ENCODE measurements at regions of chrX and their contacts with region 1.

Region 1: DNA sequence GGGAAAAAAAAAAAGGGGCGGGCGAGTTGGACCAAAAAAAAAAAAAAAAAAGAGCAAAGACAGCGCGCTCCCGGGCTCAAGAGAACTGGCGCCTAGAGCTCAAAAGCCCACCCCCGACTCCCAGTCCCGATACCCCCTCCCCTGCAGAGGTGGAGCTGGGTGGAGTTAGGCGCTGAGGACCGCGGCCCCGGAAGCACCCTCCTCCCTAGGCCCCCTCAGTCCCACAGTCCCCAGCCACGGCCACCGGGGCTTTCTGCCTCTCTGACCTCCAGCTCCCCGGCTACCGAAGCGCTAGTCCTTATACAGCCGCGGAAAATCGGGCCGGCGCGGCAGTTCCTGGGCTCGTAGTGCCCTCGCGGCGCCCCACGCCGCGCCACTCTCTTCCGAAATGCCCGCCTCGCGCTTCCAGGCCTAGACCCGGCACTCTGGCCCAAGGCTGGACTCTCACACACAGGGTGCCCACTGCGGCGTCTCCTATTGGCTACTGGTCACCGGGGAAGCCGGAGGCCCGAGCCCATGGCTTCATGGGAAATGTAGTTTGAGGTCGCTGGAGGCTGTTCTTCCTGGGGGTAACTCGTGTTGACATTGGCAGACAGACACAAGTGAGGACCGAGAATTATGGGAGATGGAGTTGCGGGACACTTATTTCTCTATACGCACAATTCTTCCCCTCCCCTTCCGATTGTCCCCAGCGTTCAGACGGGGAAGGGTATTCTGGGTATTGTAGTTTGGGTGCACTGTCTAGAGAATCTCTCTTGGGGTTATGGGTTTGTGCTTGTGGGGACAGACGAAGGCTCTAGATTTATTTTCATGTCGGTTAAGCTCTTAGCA is at the start of gene ENOX2:
- DNase-seq: peak; percentile 96
- ATAC-seq: peak; percentile 99
- H3K4me3 ChIP-seq: peak within 1 kb of the TSS; percentile 68
- H3K27ac ChIP-seq: peak within 1 kb of the TSS; percentile 85
- H3K4me1 ChIP-seq: no peaks in the 10 kb centered on the region
- H3K27me3 ChIP-seq: peaks cover 2% of the 10 kb centered on the region; the same call in 1 of the 2 replicates
- CTCF ChIP-seq: no peak
- POLR2A ChIP-seq: peak; percentile 85
- RAD21 ChIP-seq: no peak
- total RNA-seq, gene ENOX2: 11.1 and 11.8 TPM in 2 replicates

Region 2: DNA sequence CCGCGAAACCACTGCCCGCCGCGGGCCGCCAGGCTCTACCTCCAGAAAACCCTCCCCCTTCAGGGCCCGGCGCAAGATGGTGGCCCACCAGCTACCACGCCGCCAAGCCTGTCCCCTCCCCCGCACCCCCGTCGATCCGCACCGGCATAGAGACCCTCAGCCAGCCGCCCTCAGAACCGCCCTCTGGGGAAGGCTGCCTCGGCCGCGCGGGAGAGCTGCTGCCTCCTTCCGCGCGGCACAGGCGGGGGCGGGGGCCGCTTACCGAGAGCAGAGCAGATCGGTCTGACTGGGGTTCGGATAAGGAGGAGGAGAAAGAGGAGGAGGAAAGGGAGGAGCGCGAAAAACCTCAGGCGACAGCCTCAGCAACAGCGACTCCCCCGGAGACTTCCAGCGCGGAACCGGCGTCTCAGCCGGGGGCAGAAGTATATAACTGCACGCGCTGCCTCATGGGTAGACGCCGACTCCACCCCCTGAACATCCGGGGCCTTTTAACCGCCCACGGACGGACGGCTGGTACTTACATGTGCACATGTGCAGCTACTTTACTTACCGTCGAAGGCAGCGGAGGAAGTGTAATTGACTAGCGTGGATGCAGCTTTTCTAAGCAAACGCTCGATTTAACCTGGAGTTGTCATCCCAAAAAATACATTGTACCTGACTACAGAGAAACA is 634.4 kb before region 1 on chrX and contains the start of gene ZNF280C:
- CTCF ChIA-PET with region 1: no interaction called
- POLR2A ChIA-PET with region 1: no interaction called
- dilution Hi-C with region 1: no loop called
- in situ Hi-C with region 1: loop called (anchors 25 kb)
- intact Hi-C with region 1: no loop called
- DNase-seq: peak; percentile 91
- ATAC-seq: peak; percentile 97
- H3K4me3 ChIP-seq: peak within 1 kb of the TSS; percentile 91
- H3K27ac ChIP-seq: peak within 1 kb of the TSS; percentile 80
- H3K4me1 ChIP-seq: no peaks in the 10 kb centered on the region
- H3K27me3 ChIP-seq: no peaks in the 10 kb centered on the region; the same call in 1 of the 2 replicates
- CTCF ChIP-seq: peak; percentile 42
- POLR2A ChIP-seq: peak; percentile 97
- RAD21 ChIP-seq: no peak; the same call in 1 of the 2 replicates
- total RNA-seq, gene ZNF280C: 4.5 and 6.1 TPM in 2 replicates

Region 3: GRCh38 chrX:130575831-130576389 is 327.1 kb before region 1 on chrX:
- CTCF ChIA-PET with region 1: interaction called, 5 read pairs
- POLR2A ChIA-PET with region 1: no interaction called
- dilution Hi-C with region 1: no loop called
- in situ Hi-C with region 1: no loop called
- intact Hi-C with region 1: loop called (anchors 5 kb)
- DNase-seq: peak; percentile 33
- ATAC-seq: peak; percentile 81
- H3K4me3 ChIP-seq: no peak overlapping the region
- H3K27ac ChIP-seq: no peak overlapping the region
- H3K4me1 ChIP-seq: no peaks in the 10 kb centered on the region
- H3K27me3 ChIP-seq: peaks cover 2% of the 10 kb centered on the region; the same call in 1 of the 2 replicates
- CTCF ChIP-seq: peak; percentile 74
- POLR2A ChIP-seq: no peak
- RAD21 ChIP-seq: peak; percentile 84

Region 4: DNA sequence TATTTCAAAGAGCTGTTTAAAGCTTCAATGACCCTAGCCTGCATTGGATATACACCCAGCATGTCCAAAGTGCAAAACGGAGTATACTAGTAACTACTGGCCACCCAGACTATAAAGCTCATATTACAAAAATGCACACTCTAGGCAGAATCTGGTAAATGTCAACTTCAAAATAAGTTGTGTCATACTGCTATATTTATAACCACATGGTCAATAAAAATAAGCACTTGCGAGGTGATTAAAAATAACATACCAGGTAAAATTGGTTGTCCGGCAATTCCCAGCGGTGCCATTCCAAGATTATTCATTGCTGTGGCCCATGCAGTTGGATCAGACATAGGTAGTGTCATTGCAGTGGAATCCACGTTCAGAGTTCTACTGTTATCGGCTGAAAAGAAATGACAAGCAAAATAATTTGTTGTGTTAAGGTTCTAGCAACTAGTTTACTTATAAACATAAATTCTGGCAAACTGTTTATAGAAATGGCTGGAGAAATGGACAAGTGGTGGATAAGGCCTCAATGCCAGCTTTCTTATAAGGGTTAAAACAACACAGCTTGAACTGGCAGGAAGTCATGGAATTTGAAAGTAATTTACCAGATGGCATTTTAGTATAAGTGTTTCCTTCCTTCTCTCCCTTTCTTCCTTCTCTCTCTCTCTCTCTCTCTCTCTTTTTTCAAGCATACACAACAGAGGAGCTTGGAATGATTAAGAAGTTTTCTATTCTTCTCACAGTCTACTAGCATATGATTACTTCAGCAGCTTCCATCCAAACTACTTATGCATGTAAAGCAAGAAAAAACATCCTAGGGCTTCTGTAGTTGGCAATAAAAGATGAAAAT is 199.9 kb before region 1 on chrX:
- CTCF ChIA-PET with region 1: no interaction called
- POLR2A ChIA-PET with region 1: interaction called, 25 read pairs
- dilution Hi-C with region 1: no loop called
- in situ Hi-C with region 1: no loop called
- intact Hi-C with region 1: no loop called
- DNase-seq: no peak
- ATAC-seq: no peak
- H3K4me3 ChIP-seq: no peak overlapping the region
- H3K27ac ChIP-seq: no peak overlapping the region
- H3K4me1 ChIP-seq: peaks cover 3% of the 10 kb centered on the region; the same call in 1 of the 2 replicates
- H3K27me3 ChIP-seq: no peaks in the 10 kb centered on the region
- CTCF ChIP-seq: no peak
- POLR2A ChIP-seq: no peak
- RAD21 ChIP-seq: no peak

Region 5: GRCh38 chrX:130994671-130995070 is 91.7 kb after region 1 on chrX:
- CTCF ChIA-PET with region 1: no interaction called
- POLR2A ChIA-PET with region 1: no interaction called
- dilution Hi-C with region 1: no loop called
- in situ Hi-C with region 1: no loop called
- intact Hi-C with region 1: no loop called
- DNase-seq: peak; percentile 2
- ATAC-seq: no peak
- H3K4me3 ChIP-seq: no peak overlapping the region
- H3K27ac ChIP-seq: no peak overlapping the region
- H3K4me1 ChIP-seq: no peaks in the 10 kb centered on the region
- H3K27me3 ChIP-seq: peaks cover 5% of the 10 kb centered on the region; the same call in 1 of the 2 replicates
- CTCF ChIP-seq: peak; percentile 42
- POLR2A ChIP-seq: no peak
- RAD21 ChIP-seq: 0 out of 2 replicates have a peak, but pooled peaks have one; percentile 10

Region 6: DNA sequence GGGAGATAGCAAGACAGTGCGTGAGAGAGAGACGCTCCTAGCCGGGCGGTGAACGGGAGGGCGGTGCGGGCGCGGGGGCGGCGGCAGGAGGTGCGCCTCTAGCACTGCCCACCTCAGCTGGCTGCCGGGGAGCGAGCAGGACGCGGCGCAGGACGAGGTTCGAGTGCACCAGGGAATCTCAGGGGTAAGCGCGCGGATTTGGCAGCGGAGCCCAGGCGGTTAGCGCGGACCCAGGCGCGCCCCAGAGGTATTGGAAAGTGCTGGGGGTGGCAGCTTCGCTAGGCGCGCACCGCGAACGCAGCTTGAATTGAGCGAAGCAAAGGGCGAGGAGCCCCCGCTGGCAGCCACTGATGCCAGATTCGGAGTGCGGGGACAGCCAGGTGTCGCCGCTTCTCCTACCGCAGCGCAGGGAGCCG is 179.3 kb after region 1 on chrX:
- CTCF ChIA-PET with region 1: no interaction called
- POLR2A ChIA-PET with region 1: no interaction called
- dilution Hi-C with region 1: no loop called
- in situ Hi-C with region 1: no loop called
- intact Hi-C with region 1: no loop called
- DNase-seq: no peak
- ATAC-seq: no peak
- H3K4me3 ChIP-seq: no peak overlapping the region
- H3K27ac ChIP-seq: no peak overlapping the region
- H3K4me1 ChIP-seq: no peaks in the 10 kb centered on the region
- H3K27me3 ChIP-seq: peaks cover 3% of the 10 kb centered on the region
- CTCF ChIP-seq: no peak
- POLR2A ChIP-seq: no peak
- RAD21 ChIP-seq: no peak

Region 7: DNA sequence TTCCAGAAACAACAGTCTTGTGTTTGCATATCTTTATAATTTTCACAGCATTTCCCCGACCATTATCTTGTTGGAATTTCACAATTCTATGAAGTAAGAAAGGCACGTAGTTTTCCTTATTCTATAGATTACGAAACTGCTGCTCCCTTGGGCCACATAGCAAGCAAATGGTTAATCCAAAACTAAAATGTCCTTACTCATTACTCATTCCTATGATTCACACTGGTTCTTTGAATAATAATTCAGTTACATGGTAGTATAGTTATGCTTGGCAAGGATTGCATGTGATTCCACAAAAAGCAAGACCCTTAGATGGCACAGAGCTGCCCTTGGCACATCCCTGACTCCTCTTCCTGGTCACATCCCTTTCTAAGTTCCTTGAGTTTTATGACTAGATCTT is 692.1 kb after region 1 on chrX:
- CTCF ChIA-PET with region 1: no interaction called
- POLR2A ChIA-PET with region 1: no interaction called
- dilution Hi-C with region 1: no loop called
- in situ Hi-C with region 1: no loop called
- intact Hi-C with region 1: no loop called
- DNase-seq: no peak
- ATAC-seq: no peak
- H3K4me3 ChIP-seq: no peak overlapping the region
- H3K27ac ChIP-seq: no peak overlapping the region
- H3K4me1 ChIP-seq: no peaks in the 10 kb centered on the region
- H3K27me3 ChIP-seq: peaks cover 3% of the 10 kb centered on the region
- CTCF ChIP-seq: no peak
- POLR2A ChIP-seq: no peak
- RAD21 ChIP-seq: no peak